Right ventricle myocardium inferior (tissue), 1 donor: ENCODE measurements at regions of chr6 and their contacts with region 1.

Region 1: DNA sequence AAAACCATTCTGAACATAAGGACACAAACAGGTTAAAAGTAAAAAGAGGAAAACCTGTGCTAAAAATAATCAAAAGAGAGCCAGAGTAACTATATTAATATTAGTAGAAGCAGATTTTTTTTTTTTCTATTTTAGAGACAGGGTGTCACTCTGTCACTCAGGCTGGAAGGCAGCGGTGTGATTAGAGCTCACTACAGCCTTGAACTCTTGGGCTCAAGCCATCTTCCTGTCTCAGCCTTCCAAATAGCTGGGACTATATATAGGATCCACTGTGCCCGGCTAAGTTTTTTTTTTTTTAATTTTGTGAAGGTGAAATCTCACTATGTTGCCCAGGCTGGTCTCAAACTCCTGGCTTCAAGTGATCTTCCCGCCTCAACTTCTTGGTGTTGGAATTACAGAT is 33.4 kb upstream of the PLN start:
- DNase-seq: peak; percentile 70
- ATAC-seq: peak; percentile 98

Region 2: DNA sequence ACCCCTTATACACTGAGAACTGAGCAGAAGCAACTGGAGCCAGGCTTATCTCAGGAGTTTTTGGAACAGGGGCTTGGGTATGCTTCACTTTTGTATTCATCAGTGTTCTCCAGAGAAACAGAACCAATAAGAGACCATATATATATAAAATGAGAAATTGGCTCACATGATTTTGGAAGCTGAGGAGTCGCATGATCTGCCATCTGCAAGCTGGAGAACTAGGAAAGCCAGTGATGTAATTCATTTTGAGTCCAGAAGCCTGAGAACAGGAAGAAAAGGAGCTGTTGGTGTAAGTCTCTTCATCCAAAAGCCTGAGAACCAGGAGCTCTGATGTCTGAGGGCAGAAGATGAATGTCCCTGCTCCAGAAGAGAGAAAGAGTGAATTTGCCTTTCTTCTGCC is 335.6 kb before region 1 on chr6:
- intact Hi-C with region 1: no loop called
- DNase-seq: no peak
- ATAC-seq: no peak

Region 3: DNA sequence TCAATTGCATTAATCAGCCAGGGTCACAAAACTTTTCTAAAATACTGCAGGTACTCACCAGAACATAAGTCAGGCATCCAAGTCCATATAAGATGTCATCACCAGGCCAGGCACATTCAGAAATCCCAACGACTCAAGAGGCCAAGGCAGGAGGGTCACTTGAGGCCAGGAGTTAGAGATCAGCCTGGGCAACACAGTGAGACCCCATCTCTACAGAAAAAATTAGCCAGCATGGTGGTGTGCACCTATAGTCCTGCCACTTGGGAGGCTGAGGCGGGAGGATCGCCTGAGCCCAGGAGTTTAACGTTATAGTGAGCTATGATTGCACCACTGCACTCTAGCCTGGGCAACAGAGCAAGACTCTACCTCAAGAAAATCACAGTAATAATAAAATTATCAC is 245.0 kb before region 1 on chr6:
- intact Hi-C with region 1: no loop called
- DNase-seq: no peak
- ATAC-seq: no peak

Region 4: GRCh38 chr6:118542184-118542952 is 27.7 kb after region 1 on chr6:
- intact Hi-C with region 1: loop called (anchors 2 kb)
- DNase-seq: no peak
- ATAC-seq: no peak

Region 5: DNA sequence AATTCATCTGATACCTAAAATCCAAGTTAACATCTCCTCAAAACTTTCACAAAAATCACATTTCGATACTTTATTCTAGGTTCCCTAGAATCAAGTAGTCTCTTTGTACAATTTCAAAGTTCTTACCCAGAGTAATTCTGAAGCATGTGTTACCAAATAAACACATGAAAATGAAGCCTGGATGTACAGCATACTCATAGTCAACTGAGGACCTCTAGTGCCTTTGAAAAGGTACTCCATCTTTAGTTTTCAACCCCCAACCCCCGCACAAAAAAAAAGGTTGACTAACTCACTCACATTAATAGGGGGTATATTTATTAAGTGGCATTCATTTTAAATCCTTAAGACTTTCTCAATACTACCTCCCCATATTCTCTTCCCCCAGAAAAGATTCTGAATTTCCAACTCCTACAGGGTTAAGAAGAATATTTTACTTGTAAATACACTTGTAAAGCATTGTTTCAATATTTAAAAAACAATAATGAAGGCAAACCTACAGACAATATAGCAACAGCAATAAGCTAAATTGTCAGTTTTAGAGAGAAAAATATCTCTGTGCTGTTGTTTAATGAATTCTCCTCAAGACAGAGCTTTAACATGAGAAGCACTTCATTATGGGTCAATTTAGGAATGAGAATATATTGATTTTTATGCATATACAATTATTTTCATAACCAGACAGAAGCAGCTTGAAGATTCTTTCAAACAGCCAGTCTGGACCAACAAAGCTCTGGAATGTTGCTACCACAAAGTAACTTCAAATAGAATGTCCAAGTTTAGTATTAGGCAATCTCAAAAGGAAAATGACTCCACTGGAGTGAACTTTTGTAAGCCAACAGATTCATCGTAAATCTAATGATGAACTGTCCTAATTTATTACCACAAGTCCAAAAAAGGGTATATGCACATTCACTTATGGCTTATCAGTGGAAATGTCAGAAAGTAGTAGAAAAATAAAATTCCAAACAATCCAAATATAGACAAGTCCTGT is 36.7 kb after region 1 on chr6:
- intact Hi-C with region 1: loop called (anchors 2 kb)
- DNase-seq: no peak
- ATAC-seq: peak; percentile 47